ENCODE measurements at regions of chr20 and their contacts with region 1.

Region 1: GRCh38 chr20:2742934-2743559 is 50.5 kb downstream of the EBF4 start:
- DNase-seq: peak in 1 of 3 donors; percentile 64
- ATAC-seq: peak; percentile 77 to 89 (median 82)
- H3K4me3 ChIP-seq: no peak overlapping the region
- H3K27ac ChIP-seq: no peak overlapping the region
- H3K4me1 ChIP-seq: no peaks in the 10 kb centered on the region
- H3K27me3 ChIP-seq: no peaks in the 10 kb centered on the region
- CTCF ChIP-seq: peak; percentile 48 to 85 (median 83)
- POLR2A ChIP-seq: no peak

Region 2: DNA sequence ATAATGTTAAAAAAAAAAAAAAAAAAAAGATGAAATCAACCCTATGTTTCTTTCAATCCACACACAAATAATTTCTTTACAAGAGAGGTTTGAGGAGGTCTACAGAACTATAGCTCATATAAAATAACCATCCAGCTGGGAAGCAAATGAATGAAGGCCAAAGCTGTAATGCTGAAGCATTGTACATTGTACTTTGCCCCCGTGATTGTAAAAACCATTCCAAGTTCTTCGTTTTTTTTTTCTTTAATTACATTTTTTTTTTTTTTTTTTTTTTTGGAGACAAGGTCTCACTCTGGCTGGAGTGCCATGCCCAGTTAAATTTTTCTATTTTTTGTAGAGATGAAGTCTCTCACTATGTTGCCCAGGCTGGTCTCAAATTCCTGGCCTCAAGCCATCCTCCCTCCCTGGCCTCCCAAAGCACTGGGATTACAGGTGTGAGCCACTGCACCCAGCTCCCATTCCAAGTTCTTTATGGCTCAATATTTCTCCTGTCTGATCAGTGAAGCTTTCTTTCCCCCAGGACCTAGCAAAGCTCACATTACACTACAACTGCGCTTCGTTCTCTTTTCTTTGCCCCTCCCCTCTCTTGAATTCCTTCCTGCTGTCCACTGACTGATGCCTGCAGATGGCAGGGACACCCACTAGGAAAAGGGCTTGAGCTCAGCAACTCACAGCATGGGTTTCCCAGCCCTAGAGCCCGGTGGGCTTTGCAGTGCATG is 143.6 kb before region 1 on chr20:
- intact Hi-C with region 1: no loop called
- DNase-seq: no peak
- ATAC-seq: no peak
- H3K4me3 ChIP-seq: no peak overlapping the region
- H3K27ac ChIP-seq: no peak overlapping the region
- H3K4me1 ChIP-seq: no peaks in the 10 kb centered on the region
- H3K27me3 ChIP-seq: no peaks in the 10 kb centered on the region
- CTCF ChIP-seq: no peak
- POLR2A ChIP-seq: no peak

Region 3: GRCh38 chr20:2942439-2942838 is 199.4 kb after region 1 on chr20:
- intact Hi-C with region 1: no loop called
- DNase-seq: no peak
- ATAC-seq: no peak
- H3K4me3 ChIP-seq: no peak overlapping the region
- H3K27ac ChIP-seq: no peak overlapping the region
- H3K4me1 ChIP-seq: peaks cover 0 to 5% (median 2%) of the 10 kb centered on the region in 4 donors
- H3K27me3 ChIP-seq: no peaks in the 10 kb centered on the region
- CTCF ChIP-seq: no peak
- POLR2A ChIP-seq: no peak

Region 4: DNA sequence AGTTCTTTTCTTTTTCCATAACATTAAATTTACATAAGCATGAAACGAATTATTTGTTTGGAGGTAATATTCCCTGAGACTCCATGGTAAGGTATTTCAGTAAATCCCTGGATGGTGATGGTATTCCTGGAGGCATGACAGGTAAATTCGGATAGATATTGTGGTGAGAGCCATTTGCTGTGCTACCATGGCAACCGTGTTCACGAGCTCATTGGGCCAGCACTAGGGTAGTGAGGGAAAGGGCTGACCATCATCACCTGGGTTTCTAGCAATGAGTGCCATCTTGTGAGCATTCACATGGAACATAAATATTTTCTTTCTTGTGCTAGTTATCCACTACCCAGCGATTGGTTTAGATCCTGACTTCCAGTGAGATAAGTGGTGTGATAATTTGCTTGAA is 248.5 kb after region 1 on chr20:
- intact Hi-C with region 1: loop called in 1 of 2 experiments (anchors 10 kb)
- DNase-seq: no peak
- ATAC-seq: no peak
- H3K4me3 ChIP-seq: no peak overlapping the region
- H3K27ac ChIP-seq: no peak overlapping the region
- H3K4me1 ChIP-seq: no peaks in the 10 kb centered on the region
- H3K27me3 ChIP-seq: no peaks in the 10 kb centered on the region
- CTCF ChIP-seq: no peak
- POLR2A ChIP-seq: no peak

Measured in right lobe of liver (tissue), 6 donors.